ENCODE measurements at regions of chr7 and their contacts with region 1.

Region 1: GRCh38 chr7:127347567-127348246 is 44.8 kb downstream of the ZNF800 start:
- DNase-seq: peak; percentile 79
- H3K4me3 Mint-ChIP-seq: peak overlapping the region; percentile 58
- H3K27ac Mint-ChIP-seq: peak overlapping the region; percentile 71
- H3K4me1 Mint-ChIP-seq: no peaks in the 10 kb centered on the region
- H3K27me3 Mint-ChIP-seq: peaks cover 14% of the 10 kb centered on the region
- CTCF ChIP-seq: peak; percentile 59

Region 2: GRCh38 chr7:127387974-127388373 is 40.3 kb after region 1 on chr7:
- CTCF ChIA-PET with region 1: no interaction called
- intact Hi-C with region 1: loop called (anchors 5 kb)
- DNase-seq: no peak
- H3K4me3 Mint-ChIP-seq: no peak overlapping the region
- H3K27ac Mint-ChIP-seq: no peak overlapping the region
- H3K4me1 Mint-ChIP-seq: peaks cover 28% of the 10 kb centered on the region
- H3K27me3 Mint-ChIP-seq: no peaks in the 10 kb centered on the region
- CTCF ChIP-seq: no peak

Region 3: GRCh38 chr7:127514499-127514898 is 166.8 kb after region 1 on chr7:
- CTCF ChIA-PET with region 1: interaction called, 12 read pairs
- intact Hi-C with region 1: loop called (anchors 2 kb)
- DNase-seq: peak; percentile 13
- H3K4me3 Mint-ChIP-seq: no peak overlapping the region
- H3K27ac Mint-ChIP-seq: no peak overlapping the region
- H3K4me1 Mint-ChIP-seq: no peaks in the 10 kb centered on the region
- H3K27me3 Mint-ChIP-seq: peaks cover 74% of the 10 kb centered on the region
- CTCF ChIP-seq: no peak

Region 4: GRCh38 chr7:127809261-127809702 is 461.6 kb after region 1 on chr7:
- CTCF ChIA-PET with region 1: no interaction called
- intact Hi-C with region 1: no loop called
- DNase-seq: no peak
- H3K4me3 Mint-ChIP-seq: no peak overlapping the region
- H3K27ac Mint-ChIP-seq: no peak overlapping the region
- H3K4me1 Mint-ChIP-seq: no peaks in the 10 kb centered on the region
- H3K27me3 Mint-ChIP-seq: no peaks in the 10 kb centered on the region
- CTCF ChIP-seq: no peak